Panc1 (cell line): ENCODE measurements at regions of chr11 and their contacts with region 1.

Region 1: GRCh38 chr11:59668950-59669610 is at the start of gene PATL1:
- DNase-seq: peak; percentile 92
- ATAC-seq: peak; percentile 95
- H3K4me3 ChIP-seq: peak within 1 kb of the TSS; percentile 88 to 96
- H3K27ac ChIP-seq: peak within 1 kb of the TSS; percentile 98
- H3K4me1 ChIP-seq: peaks cover 20% of the 10 kb centered on the region
- H3K27me3 ChIP-seq: no peaks in the 10 kb centered on the region
- CTCF ChIP-seq: no peak
- total RNA-seq, gene PATL1: 57.0 TPM

Region 2: GRCh38 chr11:59550368-59550841 is 118.7 kb before region 1 on chr11:
- CTCF ChIA-PET with region 1: interaction called, 5 read pairs
- POLR2A ChIA-PET with region 1: interaction called, 5 read pairs
- in situ Hi-C with region 1: no loop called
- intact Hi-C with region 1: loop called (anchors 5 kb)
- DNase-seq: peak; percentile 97
- ATAC-seq: peak; percentile 90
- H3K4me3 ChIP-seq: peak overlapping the region; percentile 89 to 95
- H3K27ac ChIP-seq: peak overlapping the region; percentile 94
- H3K4me1 ChIP-seq: peaks cover 18% of the 10 kb centered on the region
- H3K27me3 ChIP-seq: no peaks in the 10 kb centered on the region
- CTCF ChIP-seq: peak; percentile 67

Region 3: DNA sequence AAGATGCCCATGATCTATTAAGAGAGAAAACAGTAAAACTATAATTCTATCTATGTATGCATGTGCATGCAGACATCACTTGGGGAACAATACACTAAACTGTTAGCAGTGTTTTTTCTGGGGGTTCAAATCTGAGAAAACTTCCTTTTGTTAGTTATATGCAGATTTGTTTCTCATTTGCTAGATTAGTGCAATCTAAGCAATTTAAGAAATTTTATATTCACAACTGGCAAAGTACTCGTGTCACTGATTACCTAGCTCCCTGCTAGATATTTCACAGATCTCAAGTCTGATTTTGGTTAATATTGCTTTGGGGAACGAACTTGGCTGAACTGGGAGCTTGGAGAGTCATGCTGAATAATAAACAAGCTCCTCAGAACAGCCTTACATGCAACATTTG is 38.6 kb before region 1 on chr11:
- CTCF ChIA-PET with region 1: no interaction called
- POLR2A ChIA-PET with region 1: no interaction called
- in situ Hi-C with region 1: no loop called
- intact Hi-C with region 1: loop called (anchors 5 kb)
- DNase-seq: no peak
- ATAC-seq: no peak
- H3K4me3 ChIP-seq: no peak overlapping the region
- H3K27ac ChIP-seq: no peak overlapping the region
- H3K4me1 ChIP-seq: no peaks in the 10 kb centered on the region
- H3K27me3 ChIP-seq: no peaks in the 10 kb centered on the region
- CTCF ChIP-seq: no peak

Region 4: GRCh38 chr11:59753650-59754493 is 84.8 kb after region 1 on chr11:
- CTCF ChIA-PET with region 1: no interaction called
- POLR2A ChIA-PET with region 1: interaction called, 16 read pairs
- in situ Hi-C with region 1: no loop called
- intact Hi-C with region 1: no loop called
- DNase-seq: peak; percentile 57
- ATAC-seq: peak; percentile 69
- H3K4me3 ChIP-seq: peak overlapping the region; percentile 81 to 98
- H3K27ac ChIP-seq: peak overlapping the region; percentile 76
- H3K4me1 ChIP-seq: peaks cover 14% of the 10 kb centered on the region
- H3K27me3 ChIP-seq: no peaks in the 10 kb centered on the region
- CTCF ChIP-seq: peak; percentile 91

Region 5: GRCh38 chr11:59802639-59803176 is 133.6 kb after region 1 on chr11:
- CTCF ChIA-PET with region 1: interaction called, 5 read pairs
- POLR2A ChIA-PET with region 1: interaction called, 4 read pairs
- in situ Hi-C with region 1: no loop called
- intact Hi-C with region 1: loop called (anchors 10 kb)
- DNase-seq: peak; percentile 28
- ATAC-seq: peak; percentile 82
- H3K4me3 ChIP-seq: no peak overlapping the region
- H3K27ac ChIP-seq: no peak overlapping the region
- H3K4me1 ChIP-seq: no peaks in the 10 kb centered on the region
- H3K27me3 ChIP-seq: no peaks in the 10 kb centered on the region
- CTCF ChIP-seq: peak; percentile 73